ENCODE measurements at regions of chrX and their contacts with region 1.

Region 1: DNA sequence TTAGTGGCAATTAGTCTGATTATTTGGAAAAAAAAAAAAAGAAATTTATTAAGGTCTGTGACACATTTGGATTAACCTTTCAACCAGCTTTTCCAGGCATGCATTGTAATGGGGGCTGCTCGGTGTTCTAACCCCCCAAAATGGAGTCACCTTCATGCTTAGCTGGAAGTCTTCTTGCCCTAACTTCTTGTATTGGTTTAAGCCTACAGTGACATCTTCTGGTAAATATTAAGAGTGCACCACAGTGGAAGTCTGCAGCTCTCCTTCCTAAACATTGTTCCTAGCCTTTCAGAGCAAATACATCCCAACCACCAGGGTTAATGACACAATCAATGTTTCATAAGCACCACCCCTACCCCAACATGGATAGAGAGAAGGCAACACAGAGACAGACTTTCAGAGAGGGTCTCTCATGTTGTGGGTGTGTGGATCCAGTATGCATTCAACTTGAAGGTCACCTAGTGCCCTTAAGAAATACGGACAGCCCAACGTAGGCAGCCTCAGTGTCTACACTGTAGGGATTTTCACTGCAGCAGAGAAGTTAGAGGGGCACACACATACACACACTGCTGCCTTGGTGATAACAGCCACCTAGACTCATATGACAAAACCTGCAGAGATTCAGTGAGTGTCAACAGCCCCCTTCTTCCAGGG is 142.9 kb upstream of the MBNL3 start:
- DNase-seq: peak in 1 of 2 donors; percentile 54
- ATAC-seq: peak in 2 of 3 donors; percentile 58 to 60
- H3K4me3 ChIP-seq: no peak overlapping the region
- H3K4me3 Mint-ChIP-seq: no peak overlapping the region
- H3K27ac ChIP-seq: no peak overlapping the region
- H3K27ac Mint-ChIP-seq: no peak overlapping the region
- H3K4me1 ChIP-seq: no peaks in the 10 kb centered on the region
- H3K4me1 Mint-ChIP-seq: no peaks in the 10 kb centered on the region
- H3K27me3 ChIP-seq: no peaks in the 10 kb centered on the region
- H3K27me3 Mint-ChIP-seq: peaks cover 4 to 36% of the 10 kb centered on the region in 2 donors
- CTCF ChIP-seq: peak; percentile 49

Region 2: DNA sequence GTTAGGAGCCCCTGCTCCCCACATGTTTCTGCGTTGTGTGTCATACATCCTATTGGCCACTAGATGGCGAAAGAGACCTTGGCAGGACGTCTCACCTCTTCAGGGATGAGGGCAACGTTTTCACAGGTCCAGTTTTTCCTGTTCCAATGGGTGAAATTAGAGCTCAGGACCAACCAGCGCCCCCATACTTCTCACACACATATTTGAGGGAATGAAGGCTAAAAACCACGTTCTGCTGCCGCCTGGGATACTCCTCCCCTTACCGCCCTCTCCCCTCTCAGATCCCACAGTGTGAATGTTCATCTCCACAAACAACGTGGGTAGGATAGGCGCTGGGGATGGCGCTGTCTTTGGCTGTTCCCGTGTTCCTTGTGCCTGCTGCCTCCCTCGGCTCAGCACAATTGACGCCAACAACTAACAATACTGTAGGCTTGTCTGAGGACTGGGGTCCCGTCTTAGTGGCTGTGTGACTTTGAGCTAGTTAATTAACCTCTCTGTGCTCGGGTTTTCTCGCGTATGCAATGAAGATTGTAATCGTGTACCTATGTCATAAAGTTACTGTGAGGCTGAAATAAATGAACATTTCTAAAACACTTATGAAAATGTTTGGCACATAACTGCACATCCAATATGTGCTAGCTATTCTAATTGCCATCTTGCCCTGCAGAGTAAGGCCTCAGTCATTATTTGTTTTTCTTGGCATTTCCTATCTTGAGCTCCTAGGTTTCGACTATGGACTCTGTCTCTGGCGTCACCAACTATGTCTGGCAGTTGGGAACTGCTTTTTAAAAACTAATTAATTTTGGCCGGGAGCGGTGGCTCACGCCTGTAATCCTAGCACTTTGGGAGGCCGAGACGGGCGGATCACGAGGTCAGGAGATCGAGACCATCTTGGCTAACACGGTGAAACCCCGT is 790.0 kb before region 1 on chrX:
- intact Hi-C with region 1: loop called (anchors 5 kb)
- DNase-seq: peak in 1 of 2 donors; percentile 74
- ATAC-seq: peak in 2 of 3 donors; percentile 76 to 92
- H3K4me3 ChIP-seq: no peak overlapping the region
- H3K4me3 Mint-ChIP-seq: no peak overlapping the region
- H3K27ac ChIP-seq: no peak overlapping the region
- H3K27ac Mint-ChIP-seq: no peak overlapping the region
- H3K4me1 ChIP-seq: peaks cover 7% of the 10 kb centered on the region
- H3K4me1 Mint-ChIP-seq: peaks cover 0 to 7% of the 10 kb centered on the region in 2 donors
- H3K27me3 ChIP-seq: no peaks in the 10 kb centered on the region
- H3K27me3 Mint-ChIP-seq: peaks cover 0 to 33% of the 10 kb centered on the region in 2 donors
- CTCF ChIP-seq: peak; percentile 69

Region 3: GRCh38 chrX:132292793-132293192 is 338.9 kb before region 1 on chrX:
- intact Hi-C with region 1: loop called (anchors 2 kb)
- DNase-seq: peak in 1 of 2 donors; percentile 70
- ATAC-seq: peak in 2 of 3 donors; percentile 38 to 81
- H3K4me3 ChIP-seq: no peak overlapping the region
- H3K4me3 Mint-ChIP-seq: no peak overlapping the region
- H3K27ac ChIP-seq: no peak overlapping the region
- H3K27ac Mint-ChIP-seq: no peak overlapping the region
- H3K4me1 ChIP-seq: no peaks in the 10 kb centered on the region
- H3K4me1 Mint-ChIP-seq: no peaks in the 10 kb centered on the region
- H3K27me3 ChIP-seq: no peaks in the 10 kb centered on the region
- H3K27me3 Mint-ChIP-seq: peaks cover 0 to 5% of the 10 kb centered on the region in 2 donors
- CTCF ChIP-seq: peak; percentile 55

Region 4: GRCh38 chrX:133053861-133054598 is 422.3 kb after region 1 on chrX:
- intact Hi-C with region 1: no loop called
- DNase-seq: no peak
- ATAC-seq: no peak
- H3K4me3 ChIP-seq: no peak overlapping the region
- H3K4me3 Mint-ChIP-seq: no peak overlapping the region
- H3K27ac ChIP-seq: no peak overlapping the region
- H3K27ac Mint-ChIP-seq: no peak overlapping the region
- H3K4me1 ChIP-seq: no peaks in the 10 kb centered on the region
- H3K4me1 Mint-ChIP-seq: no peaks in the 10 kb centered on the region
- H3K27me3 ChIP-seq: no peaks in the 10 kb centered on the region
- H3K27me3 Mint-ChIP-seq: peaks cover 6 to 66% of the 10 kb centered on the region in 2 donors
- CTCF ChIP-seq: no peak

Measured in natural killer cell (primary cell).